ENCODE measurements at regions of chr20 and their contacts with region 1.

Region 1: DNA sequence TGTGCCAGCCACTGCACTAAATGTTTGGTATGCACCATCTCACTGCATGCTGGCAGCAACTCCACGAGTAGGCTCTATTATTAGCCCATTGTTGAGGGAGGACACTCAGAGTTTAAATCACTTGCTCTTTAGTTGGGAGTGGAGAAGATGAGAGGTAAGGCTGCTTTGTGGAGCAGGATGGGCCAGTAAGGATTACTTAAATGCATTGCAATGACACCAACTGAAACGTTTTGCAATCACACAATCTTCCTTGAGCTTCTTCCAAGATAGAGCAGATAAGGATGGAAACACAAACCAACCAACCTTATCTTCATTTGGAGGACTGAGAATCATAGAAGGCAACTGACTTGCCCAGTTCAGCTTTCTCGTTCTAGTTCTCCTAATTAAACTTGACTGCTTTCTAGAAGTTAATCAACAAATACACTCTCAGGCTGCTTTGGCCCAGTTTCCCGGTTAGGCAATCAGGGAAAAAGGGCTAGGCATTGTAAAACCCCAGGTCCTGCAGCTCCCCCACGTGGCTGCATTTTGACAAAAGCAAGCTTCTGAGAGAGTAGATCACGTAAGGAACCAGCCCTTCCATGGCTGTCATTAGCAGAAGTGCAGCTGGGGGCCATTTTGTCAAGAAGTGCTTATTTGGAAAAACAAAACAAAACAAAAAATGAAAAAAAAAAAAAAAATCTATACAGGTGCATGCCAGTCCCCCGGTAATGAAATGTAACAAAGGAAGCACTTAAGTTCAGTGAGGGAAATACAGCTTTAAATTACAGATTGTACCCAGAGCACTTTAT is 130.6 kb downstream of the BCAS1 start:
- DNase-seq: peak; percentile 92
- H3K27ac ChIP-seq: no peak overlapping the region
- CTCF ChIP-seq: peak; percentile 96

Region 2: GRCh38 chr20:53561505-53561904 is 378.3 kb before region 1 on chr20:
- CTCF ChIA-PET with region 1: interaction called, 11 read pairs
- POLR2A ChIA-PET with region 1: no interaction called
- DNase-seq: no peak
- H3K27ac ChIP-seq: no peak overlapping the region
- CTCF ChIP-seq: no peak

Region 3: GRCh38 chr20:53813636-53814429 is 125.9 kb before region 1 on chr20:
- CTCF ChIA-PET with region 1: no interaction called
- POLR2A ChIA-PET with region 1: no interaction called
- DNase-seq: no peak
- H3K27ac ChIP-seq: no peak overlapping the region
- CTCF ChIP-seq: no peak

Region 4: GRCh38 chr20:53915446-53916172 is 24.2 kb before region 1 on chr20:
- CTCF ChIA-PET with region 1: interaction called, 24 read pairs
- POLR2A ChIA-PET with region 1: no interaction called
- DNase-seq: peak; percentile 96
- H3K27ac ChIP-seq: peak overlapping the region; percentile 81
- CTCF ChIP-seq: peak; percentile 99

Region 5: DNA sequence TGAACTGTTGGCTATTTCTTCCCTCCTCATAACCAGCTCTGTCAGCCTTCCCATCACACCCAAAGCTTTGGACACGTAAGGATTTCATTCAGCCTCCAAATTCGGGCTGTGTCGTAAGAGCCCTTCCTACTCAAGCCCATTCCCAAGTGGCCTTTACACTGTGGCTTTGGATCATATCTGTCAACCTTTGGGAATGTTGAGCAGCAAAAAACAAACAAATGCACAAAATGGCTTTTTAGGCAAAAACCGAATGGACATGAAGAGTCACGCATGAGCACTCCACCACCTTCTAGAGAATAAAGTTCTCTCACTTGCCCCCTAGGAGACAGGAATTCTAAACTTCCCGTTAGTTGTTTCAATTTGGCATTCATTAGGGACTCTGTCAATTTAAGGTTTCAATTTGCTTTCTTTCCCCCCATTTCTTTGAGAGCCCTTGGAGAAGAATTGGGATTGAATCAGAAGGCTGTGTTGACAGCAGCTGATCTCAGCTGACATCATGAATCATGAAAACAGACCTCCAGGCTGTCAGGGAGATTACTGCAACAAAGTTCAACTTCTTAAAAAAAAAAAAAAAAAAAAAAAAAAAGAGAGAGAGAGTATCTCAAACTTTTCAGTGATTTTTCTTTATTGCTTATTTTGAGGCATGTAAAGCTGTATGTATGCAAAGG is 20.3 kb after region 1 on chr20:
- CTCF ChIA-PET with region 1: interaction called, 11 read pairs
- POLR2A ChIA-PET with region 1: no interaction called
- DNase-seq: no peak
- H3K27ac ChIP-seq: no peak overlapping the region
- CTCF ChIP-seq: no peak